ENCODE measurements at regions of chr12 and their contacts with region 1.

Region 1: GRCh38 chr12:11347810-11348209 is 37.6 kb upstream of the PRB4 start:
- DNase-seq: no peak
- ATAC-seq: no peak
- H3K4me3 ChIP-seq: no peak overlapping the region
- H3K27ac ChIP-seq: no peak overlapping the region
- H3K4me1 ChIP-seq: no peaks in the 10 kb centered on the region
- H3K27me3 ChIP-seq: no peaks in the 10 kb centered on the region

Region 2: GRCh38 chr12:11397366-11397765 is 49.6 kb after region 1 on chr12:
- intact Hi-C with region 1: loop called in 1 of 2 experiments (anchors 2 kb)
- DNase-seq: no peak
- ATAC-seq: no peak
- H3K4me3 ChIP-seq: no peak overlapping the region
- H3K27ac ChIP-seq: no peak overlapping the region
- H3K4me1 ChIP-seq: no peaks in the 10 kb centered on the region
- H3K27me3 ChIP-seq: no peaks in the 10 kb centered on the region

Region 3: GRCh38 chr12:11446372-11446771 is 98.6 kb after region 1 on chr12:
- intact Hi-C with region 1: no loop called
- DNase-seq: no peak
- ATAC-seq: no peak
- H3K4me3 ChIP-seq: no peak overlapping the region
- H3K27ac ChIP-seq: no peak overlapping the region
- H3K4me1 ChIP-seq: no peaks in the 10 kb centered on the region
- H3K27me3 ChIP-seq: no peaks in the 10 kb centered on the region

Measured in aorta (tissue), 5 donors.